ENCODE measurements at regions of chr1 and their contacts with region 1.

Region 1: GRCh38 chr1:167862432-167863076 is 51.4 kb downstream of the ADCY10 start:
- DNase-seq: no peak
- ATAC-seq: no peak
- H3K4me3 ChIP-seq: no peak overlapping the region
- H3K4me3 Mint-ChIP-seq: no peak overlapping the region
- H3K27ac ChIP-seq: no peak overlapping the region
- H3K27ac Mint-ChIP-seq: no peak overlapping the region
- H3K4me1 ChIP-seq: no peaks in the 10 kb centered on the region
- H3K4me1 Mint-ChIP-seq: no peaks in the 10 kb centered on the region
- H3K27me3 ChIP-seq: peaks cover 0 to 5% of the 10 kb centered on the region in 2 experiments
- H3K27me3 Mint-ChIP-seq: peaks cover 0 to 2% of the 10 kb centered on the region in 2 donors

Region 2: GRCh38 chr1:167839009-167839408 is 23.5 kb before region 1 on chr1:
- CTCF ChIA-PET with region 1: no interaction called
- POLR2A ChIA-PET with region 1: no interaction called
- DNase-seq: no peak
- ATAC-seq: no peak
- H3K4me3 ChIP-seq: no peak overlapping the region
- H3K4me3 Mint-ChIP-seq: no peak overlapping the region
- H3K27ac ChIP-seq: no peak overlapping the region
- H3K27ac Mint-ChIP-seq: no peak overlapping the region
- H3K4me1 ChIP-seq: no peaks in the 10 kb centered on the region
- H3K4me1 Mint-ChIP-seq: no peaks in the 10 kb centered on the region
- H3K27me3 ChIP-seq: no peaks in the 10 kb centered on the region
- H3K27me3 Mint-ChIP-seq: peaks cover 3 to 9% of the 10 kb centered on the region in 2 donors

Region 3: DNA sequence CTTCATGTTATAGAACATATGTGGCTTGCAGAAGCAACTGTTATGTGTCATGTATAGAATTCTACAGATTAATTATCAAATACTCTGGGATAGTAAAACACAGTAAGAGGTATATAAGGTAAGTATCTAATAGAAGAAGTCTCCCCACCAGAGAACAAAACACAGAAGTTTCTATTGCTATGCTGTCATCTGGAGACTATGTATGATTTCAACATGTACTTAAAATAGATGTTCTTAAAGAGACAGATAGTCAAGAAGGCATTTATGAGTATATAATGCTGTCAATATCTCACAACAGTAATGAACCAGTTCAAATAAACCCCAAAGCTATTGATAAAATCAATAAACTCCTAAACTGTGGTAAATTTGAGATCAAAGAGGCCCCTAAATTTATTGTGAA is 59.5 kb after region 1 on chr1:
- CTCF ChIA-PET with region 1: no interaction called
- POLR2A ChIA-PET with region 1: interaction called in 1 of 2 experiments, 12 read pairs
- DNase-seq: no peak
- ATAC-seq: no peak
- H3K4me3 ChIP-seq: no peak overlapping the region
- H3K4me3 Mint-ChIP-seq: no peak overlapping the region
- H3K27ac ChIP-seq: no peak overlapping the region
- H3K27ac Mint-ChIP-seq: no peak overlapping the region
- H3K4me1 ChIP-seq: no peaks in the 10 kb centered on the region
- H3K4me1 Mint-ChIP-seq: peaks cover 14 to 21% (median 16%) of the 10 kb centered on the region in 3 donors
- H3K27me3 ChIP-seq: no peaks in the 10 kb centered on the region
- H3K27me3 Mint-ChIP-seq: no peaks in the 10 kb centered on the region